ENCODE measurements at regions of chr2 and their contacts with region 1.

Region 1: GRCh38 chr2:163644238-163644637 is 91.6 kb downstream of the FIGN start:
- DNase-seq: no peak
- H3K4me3 ChIP-seq: no peak overlapping the region
- H3K27ac ChIP-seq: no peak overlapping the region
- H3K4me1 ChIP-seq: peaks cover 0 to 12% of the 10 kb centered on the region in 2 experiments; a peak in 2 of 4 replicates
- H3K27me3 ChIP-seq: no peaks in the 10 kb centered on the region
- CTCF ChIP-seq: peak; percentile 23; the same call in 1 of the 2 replicates
- EP300 ChIP-seq: no peak
- RAD21 ChIP-seq: no peak

Region 2: DNA sequence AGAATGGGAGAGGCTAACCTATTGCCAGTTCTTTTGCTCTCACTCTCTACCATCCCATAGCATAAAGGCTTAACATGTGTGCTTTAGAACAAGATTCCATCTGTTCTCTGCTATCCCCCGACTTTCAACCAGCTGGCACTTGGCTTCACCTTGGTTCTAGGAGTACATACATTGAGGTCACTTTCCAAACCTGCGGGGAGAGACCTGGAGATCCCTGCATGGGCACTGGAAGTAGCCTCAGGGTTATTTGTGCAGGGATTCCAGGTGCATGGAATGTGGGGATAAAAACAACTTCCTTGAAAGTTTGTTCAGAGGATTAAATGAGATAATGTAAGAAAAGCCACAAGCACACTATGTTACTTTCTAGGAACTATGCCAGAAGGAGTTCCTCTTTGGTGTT is 11.9 kb before region 1 on chr2:
- CTCF ChIA-PET with region 1: interaction called, 16 read pairs
- POLR2A ChIA-PET with region 1: no interaction called
- DNase-seq: no peak
- H3K4me3 ChIP-seq: no peak overlapping the region
- H3K27ac ChIP-seq: no peak overlapping the region
- H3K4me1 ChIP-seq: no peaks in the 10 kb centered on the region; a peak in 1 of 4 replicates
- H3K27me3 ChIP-seq: no peaks in the 10 kb centered on the region
- CTCF ChIP-seq: no peak
- EP300 ChIP-seq: no peak
- RAD21 ChIP-seq: no peak